ENCODE measurements at regions of chr7 and their contacts with region 1.

Region 1: GRCh38 chr7:36487756-36488336 is 98.2 kb downstream of the ANLN start:
- DNase-seq: peak; percentile 46
- ATAC-seq: peak; percentile 79
- H3K4me3 Mint-ChIP-seq: no peak overlapping the region
- H3K27ac Mint-ChIP-seq: no peak overlapping the region
- H3K4me1 Mint-ChIP-seq: no peaks in the 10 kb centered on the region
- H3K27me3 Mint-ChIP-seq: no peaks in the 10 kb centered on the region
- CTCF ChIP-seq: peak; percentile 82

Region 2: DNA sequence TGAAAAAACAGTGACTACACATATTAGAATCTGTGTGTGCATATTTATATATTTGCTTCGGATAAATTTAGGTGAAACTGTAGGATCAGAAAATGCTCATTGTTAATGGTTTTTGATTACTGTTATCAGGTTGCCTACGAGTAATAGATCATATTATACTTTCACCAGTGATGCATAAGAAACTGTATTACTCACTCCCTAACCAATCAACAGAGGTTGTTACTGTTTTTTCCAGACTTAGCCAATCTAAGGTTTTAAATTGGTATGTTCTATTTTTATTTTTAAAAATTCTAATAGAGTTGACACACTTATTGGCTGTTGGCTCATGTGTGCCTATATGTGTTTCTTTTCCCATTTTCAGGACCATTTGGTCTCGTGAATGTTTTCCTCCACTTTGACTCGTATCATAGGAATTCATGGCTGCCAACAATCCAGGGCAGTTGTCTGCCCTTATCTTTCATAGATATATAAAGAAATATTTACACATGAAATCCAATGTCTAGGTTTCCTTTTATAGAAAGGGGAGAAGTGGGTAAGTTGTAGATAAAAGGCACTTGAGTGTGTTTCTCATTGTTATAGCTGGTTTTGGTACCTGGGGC is 39.0 kb before region 1 on chr7:
- CTCF ChIA-PET with region 1: no interaction called
- POLR2A ChIA-PET with region 1: no interaction called
- intact Hi-C with region 1: no loop called
- DNase-seq: no peak
- ATAC-seq: no peak
- H3K4me3 Mint-ChIP-seq: no peak overlapping the region
- H3K27ac Mint-ChIP-seq: no peak overlapping the region
- H3K4me1 Mint-ChIP-seq: no peaks in the 10 kb centered on the region
- H3K27me3 Mint-ChIP-seq: no peaks in the 10 kb centered on the region
- CTCF ChIP-seq: no peak

Region 3: DNA sequence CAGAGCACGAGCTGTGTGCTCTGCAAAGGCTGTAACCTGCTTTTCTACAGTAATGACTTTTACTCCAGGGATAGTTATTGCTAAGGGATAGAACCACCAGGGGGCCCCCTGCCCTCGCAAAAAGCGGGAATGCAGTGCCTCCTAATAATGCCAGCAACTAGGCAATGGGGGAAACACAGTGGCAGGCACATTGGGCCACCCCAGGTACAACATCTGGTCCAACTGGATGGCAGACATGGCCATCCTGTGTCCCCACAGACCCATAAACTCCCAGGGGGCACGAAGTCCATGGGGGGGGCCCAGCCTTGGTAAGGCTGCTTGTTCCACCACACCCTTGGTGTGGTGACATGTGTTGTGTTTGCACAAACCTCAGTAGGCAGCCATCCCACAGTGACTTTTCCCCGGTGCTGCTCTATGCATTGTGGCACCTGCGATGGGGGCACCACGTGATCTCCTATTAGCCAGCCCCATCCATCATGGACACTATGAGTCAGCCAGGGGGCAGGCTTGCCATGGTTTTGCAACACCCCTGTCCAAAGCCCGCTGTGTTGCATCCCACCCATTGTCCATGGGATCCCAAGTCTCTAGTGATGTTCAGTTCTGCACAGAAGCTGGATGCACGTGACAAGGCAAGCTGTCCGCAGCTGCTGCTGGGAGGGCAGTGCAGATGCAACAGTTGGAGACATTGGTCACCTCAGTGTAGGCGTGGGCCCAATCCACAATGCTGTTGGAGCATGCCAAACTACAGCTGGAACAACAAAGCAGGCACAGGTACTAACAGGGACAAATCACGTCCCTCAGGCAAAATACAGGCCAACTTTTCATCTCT is 14.2 kb before region 1 on chr7:
- CTCF ChIA-PET with region 1: interaction called, 11 read pairs
- POLR2A ChIA-PET with region 1: no interaction called
- intact Hi-C with region 1: no loop called
- DNase-seq: peak; percentile 65
- ATAC-seq: peak; percentile 31
- H3K4me3 Mint-ChIP-seq: no peak overlapping the region
- H3K27ac Mint-ChIP-seq: peak overlapping the region; percentile 39
- H3K4me1 Mint-ChIP-seq: peaks cover 20% of the 10 kb centered on the region
- H3K27me3 Mint-ChIP-seq: no peaks in the 10 kb centered on the region
- CTCF ChIP-seq: no peak

Region 4: GRCh38 chr7:36986429-36987362 is 498.9 kb after region 1 on chr7:
- CTCF ChIA-PET with region 1: interaction called, 3 read pairs
- POLR2A ChIA-PET with region 1: no interaction called
- intact Hi-C with region 1: loop called (anchors 10 kb)
- DNase-seq: peak; percentile 79
- ATAC-seq: peak; percentile 91
- H3K4me3 Mint-ChIP-seq: no peak overlapping the region
- H3K27ac Mint-ChIP-seq: no peak overlapping the region
- H3K4me1 Mint-ChIP-seq: peaks cover 31% of the 10 kb centered on the region
- H3K27me3 Mint-ChIP-seq: no peaks in the 10 kb centered on the region
- CTCF ChIP-seq: peak; percentile 79

Region 5: DNA sequence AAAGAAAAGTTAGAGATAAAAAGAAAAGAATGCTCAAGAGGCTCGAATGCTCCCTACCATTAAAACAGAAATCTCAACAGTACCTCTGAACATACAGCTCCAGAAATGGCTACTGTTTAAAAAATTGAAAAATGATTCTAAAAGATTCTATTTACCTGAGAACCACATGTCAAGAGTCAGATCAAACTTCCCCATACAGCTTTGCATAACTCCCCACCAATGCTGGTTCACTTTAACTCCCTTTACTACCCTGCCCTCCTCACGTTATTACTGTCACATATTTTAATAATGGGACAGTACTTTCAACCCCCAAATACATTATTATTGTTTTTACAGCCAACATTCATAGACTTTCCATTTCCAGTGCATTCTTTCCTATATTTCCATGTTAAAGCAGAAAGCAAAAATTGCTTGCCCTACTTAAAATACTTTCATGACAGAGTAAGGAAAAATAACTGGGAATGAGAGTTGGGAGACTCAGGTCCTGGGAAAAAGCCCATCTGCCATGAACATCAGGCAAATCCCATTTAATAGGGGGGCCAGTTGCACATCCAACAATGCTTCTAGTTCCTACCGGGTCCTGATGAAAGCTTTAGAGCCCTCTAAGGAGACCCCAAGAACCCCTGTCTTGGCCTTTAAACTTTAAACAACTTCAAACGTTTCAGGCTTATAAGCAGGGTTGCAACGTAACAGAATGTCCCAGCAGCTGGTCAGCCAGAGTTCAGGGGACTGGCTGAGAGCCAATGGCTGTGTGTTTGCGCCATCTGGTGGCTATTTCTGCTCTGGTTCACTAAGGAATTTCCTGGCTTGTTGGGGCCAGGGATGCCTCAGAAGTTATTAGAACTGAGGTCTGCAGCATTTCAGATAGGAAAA is 713.4 kb after region 1 on chr7:
- CTCF ChIA-PET with region 1: interaction called, 64 read pairs
- POLR2A ChIA-PET with region 1: no interaction called
- intact Hi-C with region 1: loop called (anchors 5 kb)
- DNase-seq: peak; percentile 67
- ATAC-seq: peak; percentile 62
- H3K4me3 Mint-ChIP-seq: no peak overlapping the region
- H3K27ac Mint-ChIP-seq: peak overlapping the region; percentile 8
- H3K4me1 Mint-ChIP-seq: peaks cover 10% of the 10 kb centered on the region
- H3K27me3 Mint-ChIP-seq: no peaks in the 10 kb centered on the region
- CTCF ChIP-seq: peak; percentile 63

Measured in activated CD8-positive, alpha-beta T cell treated with anti-CD3 and anti-CD28 coated beads for 36 hours (primary cell).